HCT116 (cell line): ENCODE measurements at regions of chr11 and their contacts with region 1.

Region 1: DNA sequence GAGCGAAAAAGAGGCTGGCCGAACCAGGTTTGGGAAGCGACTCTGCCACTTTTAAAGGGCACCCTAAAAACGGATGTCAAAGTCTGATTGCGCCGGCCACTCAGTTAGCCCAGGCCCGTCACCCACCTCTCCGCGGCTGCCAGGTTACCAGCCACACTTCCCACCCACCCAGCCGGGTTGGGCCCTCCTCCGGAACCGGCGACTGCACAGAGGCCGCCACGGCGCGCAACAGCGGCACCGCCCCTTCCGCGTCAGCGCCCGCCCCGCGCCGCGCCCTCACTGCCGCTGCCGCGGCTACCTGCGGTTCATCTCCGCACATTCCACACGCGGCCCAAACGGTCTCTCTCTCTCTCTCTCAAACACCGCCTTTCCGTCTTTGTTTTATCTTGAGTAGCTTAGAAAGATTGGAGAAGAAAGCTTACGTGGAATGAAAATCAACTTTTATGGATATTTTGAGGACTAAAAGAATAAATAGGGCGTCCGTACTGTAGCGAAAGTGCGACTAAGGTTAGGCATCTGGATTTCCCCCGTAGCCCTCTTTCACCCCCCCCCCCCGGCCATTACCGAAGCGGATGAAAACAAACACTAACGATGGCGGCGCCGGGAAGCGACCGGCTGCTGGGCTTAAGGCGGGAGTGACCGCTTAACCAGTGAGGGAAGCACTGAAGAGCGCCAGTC is at the starts of genes ATG13 and HARBI1:
- DNase-seq: peak; percentile 82
- ATAC-seq: peak; percentile 95
- H3K4me3 ChIP-seq: peak within 1 kb of the TSS; percentile 71 to 99
- H3K27ac ChIP-seq: peak within 1 kb of the TSS; percentile 73
- H3K4me1 ChIP-seq: peaks cover 13 to 23% of the 10 kb centered on the region in 2 experiments
- H3K27me3 ChIP-seq: no peaks in the 10 kb centered on the region
- CTCF ChIP-seq: no peak
- POLR2A ChIP-seq: peak; percentile 14
- RAD21 ChIP-seq: no peak; the same call in 1 of the 2 replicates
- total RNA-seq, gene ATG13: 69.2 TPM
- total RNA-seq, gene HARBI1: 1.9 TPM

Region 2: GRCh38 chr11:46554205-46555055 is 62.7 kb before region 1 on chr11:
- CTCF ChIA-PET with region 1: no interaction called
- POLR2A ChIA-PET with region 1: no interaction called
- RAD21 ChIA-PET with region 1: no interaction called
- intact Hi-C with region 1: loop called (anchors 1 kb)
- DNase-seq: peak; percentile 80
- ATAC-seq: peak; percentile 75
- H3K4me3 ChIP-seq: peak overlapping the region; percentile 1 to 32; a peak in 3 of 4 replicates
- H3K27ac ChIP-seq: peak overlapping the region; percentile 76
- H3K4me1 ChIP-seq: peaks cover 55 to 65% of the 10 kb centered on the region in 2 experiments
- H3K27me3 ChIP-seq: no peaks in the 10 kb centered on the region
- CTCF ChIP-seq: no peak
- POLR2A ChIP-seq: no peak
- RAD21 ChIP-seq: no peak

Region 3: DNA sequence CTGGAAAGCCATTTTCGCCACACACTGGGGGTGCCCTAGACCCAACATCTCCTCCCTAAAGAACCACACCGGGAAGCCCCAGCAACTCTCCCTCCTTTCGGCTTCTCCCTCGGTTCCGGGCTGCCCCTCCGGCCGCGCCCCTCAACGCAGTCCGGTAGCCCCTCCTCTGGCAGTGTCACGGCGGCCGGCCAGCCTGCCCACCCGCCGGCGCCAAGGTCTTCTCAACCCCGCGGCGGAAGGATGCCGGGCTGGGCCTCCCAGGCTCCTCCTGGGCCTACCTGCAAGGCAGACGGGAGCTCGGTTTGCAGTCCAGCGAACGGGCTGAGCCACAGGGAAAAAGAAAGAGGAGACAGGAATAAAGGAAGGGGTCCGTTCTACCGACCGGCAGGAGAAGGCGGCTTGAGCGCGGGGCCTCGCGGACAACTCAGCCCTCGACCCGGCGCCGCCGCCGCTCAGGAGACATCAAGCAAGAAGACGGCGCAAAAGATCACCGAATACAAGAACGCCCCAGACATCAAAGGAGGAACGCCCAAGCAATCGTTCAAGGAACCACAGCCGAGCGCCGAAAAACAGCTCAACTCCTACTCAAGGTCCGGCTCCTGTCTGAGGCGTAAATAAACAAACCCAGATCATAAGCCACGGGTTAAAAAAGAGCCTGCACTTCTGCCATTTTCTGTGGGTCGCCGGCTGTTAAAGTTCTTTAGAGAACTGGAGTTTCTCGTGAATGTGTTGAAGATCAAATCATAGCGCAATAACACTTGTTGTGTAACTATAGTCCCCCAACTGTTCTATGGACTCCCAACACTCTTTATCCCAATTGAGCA is 23.4 kb before region 1 on chr11 and contains the start of gene AMBRA1:
- CTCF ChIA-PET with region 1: no interaction called
- POLR2A ChIA-PET with region 1: no interaction called
- RAD21 ChIA-PET with region 1: no interaction called
- intact Hi-C with region 1: loop called (anchors 1 kb)
- DNase-seq: peak; percentile 88
- ATAC-seq: peak; percentile 89
- H3K4me3 ChIP-seq: peak within 1 kb of the TSS; percentile 64 to 93
- H3K27ac ChIP-seq: peak within 1 kb of the TSS; percentile 61
- H3K4me1 ChIP-seq: peaks cover 12 to 28% of the 10 kb centered on the region in 2 experiments
- H3K27me3 ChIP-seq: no peaks in the 10 kb centered on the region
- CTCF ChIP-seq: no peak
- POLR2A ChIP-seq: peak; percentile 47
- RAD21 ChIP-seq: no peak
- total RNA-seq, gene AMBRA1: 22.7 TPM

Region 4: DNA sequence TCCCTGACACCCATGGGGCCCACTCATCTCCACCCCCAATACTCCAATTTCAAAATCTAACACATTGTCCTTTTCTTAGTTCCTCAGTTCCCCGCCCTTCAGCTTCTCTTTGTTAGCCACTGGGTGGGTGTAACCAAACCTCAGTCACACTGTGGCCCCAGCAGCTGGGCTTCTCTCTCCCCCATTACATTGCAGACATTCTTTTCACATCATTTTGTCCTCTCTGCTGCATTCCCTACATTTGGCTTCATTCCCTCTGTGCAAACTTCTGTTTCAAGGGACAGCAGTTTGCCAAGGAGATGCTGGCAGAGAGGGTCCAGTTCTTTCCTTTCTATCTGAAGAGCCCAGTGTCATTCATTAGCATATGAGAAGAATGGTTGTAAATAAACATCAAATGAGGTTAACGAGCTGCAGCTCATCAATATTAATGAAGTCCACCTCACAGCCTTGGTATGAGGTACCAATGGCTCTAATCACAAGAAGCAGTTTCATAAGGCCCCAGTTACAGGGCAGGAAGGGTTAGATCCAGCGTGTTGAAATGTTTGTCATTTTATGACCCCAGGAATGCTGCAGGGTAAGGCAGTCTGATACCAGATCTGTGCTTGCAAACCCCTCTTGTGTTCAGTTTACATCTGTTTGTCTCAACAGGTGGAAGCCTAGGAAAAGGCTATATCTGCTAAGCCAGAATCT is 487.3 kb after region 1 on chr11:
- CTCF ChIA-PET with region 1: no interaction called
- POLR2A ChIA-PET with region 1: no interaction called
- RAD21 ChIA-PET with region 1: no interaction called
- intact Hi-C with region 1: no loop called
- DNase-seq: no peak
- ATAC-seq: no peak
- H3K4me3 ChIP-seq: no peak overlapping the region
- H3K27ac ChIP-seq: no peak overlapping the region
- H3K4me1 ChIP-seq: peaks cover 2 to 5% of the 10 kb centered on the region in 2 experiments; a peak in 2 of 4 replicates
- H3K27me3 ChIP-seq: no peaks in the 10 kb centered on the region
- CTCF ChIP-seq: no peak
- POLR2A ChIP-seq: no peak
- RAD21 ChIP-seq: no peak